ENCODE measurements at regions of chr6 and their contacts with region 1.

Region 1: DNA sequence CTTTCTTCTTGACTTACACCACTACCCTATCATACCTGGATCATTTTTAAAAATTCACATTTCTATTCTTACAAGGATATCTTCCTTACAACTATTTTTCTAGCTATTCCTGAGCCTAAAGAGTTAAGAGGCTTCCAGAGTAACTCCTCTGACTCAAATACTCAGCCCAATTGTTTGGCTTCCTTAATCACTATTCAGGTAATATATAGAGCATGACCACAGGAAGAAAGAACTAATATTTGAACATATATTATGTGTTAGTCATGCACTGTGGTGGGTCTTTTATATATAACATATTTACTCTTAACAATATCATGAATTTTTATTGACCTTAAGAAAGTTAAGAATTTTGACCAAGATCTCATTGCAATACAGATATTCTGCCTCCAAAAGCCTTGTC is 42.0 kb upstream of the ID4 start:
- DNase-seq: peak; percentile 93
- ATAC-seq: peak; percentile 98
- H3K4me3 ChIP-seq: no peak overlapping the region
- H3K27ac ChIP-seq: peak overlapping the region; percentile 71
- H3K4me1 ChIP-seq: peaks cover 24% of the 10 kb centered on the region
- H3K27me3 ChIP-seq: no peaks in the 10 kb centered on the region
- CTCF ChIP-seq: no peak

Region 2: GRCh38 chr6:19723533-19723932 is 71.7 kb before region 1 on chr6:
- CTCF ChIA-PET with region 1: no interaction called
- POLR2A ChIA-PET with region 1: interaction called, 12 read pairs
- intact Hi-C with region 1: loop called (anchors 1 kb)
- DNase-seq: peak; percentile 79
- ATAC-seq: peak; percentile 99
- H3K4me3 ChIP-seq: no peak overlapping the region
- H3K27ac ChIP-seq: peak overlapping the region; percentile 37
- H3K4me1 ChIP-seq: peaks cover 12% of the 10 kb centered on the region
- H3K27me3 ChIP-seq: no peaks in the 10 kb centered on the region
- CTCF ChIP-seq: no peak

Region 3: GRCh38 chr6:19818805-19819204 is 23.6 kb after region 1 on chr6:
- CTCF ChIA-PET with region 1: no interaction called
- POLR2A ChIA-PET with region 1: no interaction called
- intact Hi-C with region 1: no loop called
- DNase-seq: peak; percentile 53
- ATAC-seq: peak; percentile 58; the same call in 1 of the 2 replicates
- H3K4me3 ChIP-seq: no peak overlapping the region
- H3K27ac ChIP-seq: no peak overlapping the region
- H3K4me1 ChIP-seq: peaks cover 8% of the 10 kb centered on the region; the same call in 1 of the 2 replicates
- H3K27me3 ChIP-seq: no peaks in the 10 kb centered on the region
- CTCF ChIP-seq: no peak

Region 4: GRCh38 chr6:19845266-19846041 is 50.2 kb after region 1 on chr6:
- CTCF ChIA-PET with region 1: no interaction called
- POLR2A ChIA-PET with region 1: no interaction called
- intact Hi-C with region 1: no loop called
- DNase-seq: peak; percentile 59
- ATAC-seq: peak; percentile 59; the same call in 1 of the 2 replicates
- H3K4me3 ChIP-seq: no peak overlapping the region
- H3K27ac ChIP-seq: peak overlapping the region; percentile 27; the same call in 1 of the 2 replicates
- H3K4me1 ChIP-seq: no peaks in the 10 kb centered on the region; the same call in 1 of the 2 replicates
- H3K27me3 ChIP-seq: no peaks in the 10 kb centered on the region
- CTCF ChIP-seq: no peak

Region 5: DNA sequence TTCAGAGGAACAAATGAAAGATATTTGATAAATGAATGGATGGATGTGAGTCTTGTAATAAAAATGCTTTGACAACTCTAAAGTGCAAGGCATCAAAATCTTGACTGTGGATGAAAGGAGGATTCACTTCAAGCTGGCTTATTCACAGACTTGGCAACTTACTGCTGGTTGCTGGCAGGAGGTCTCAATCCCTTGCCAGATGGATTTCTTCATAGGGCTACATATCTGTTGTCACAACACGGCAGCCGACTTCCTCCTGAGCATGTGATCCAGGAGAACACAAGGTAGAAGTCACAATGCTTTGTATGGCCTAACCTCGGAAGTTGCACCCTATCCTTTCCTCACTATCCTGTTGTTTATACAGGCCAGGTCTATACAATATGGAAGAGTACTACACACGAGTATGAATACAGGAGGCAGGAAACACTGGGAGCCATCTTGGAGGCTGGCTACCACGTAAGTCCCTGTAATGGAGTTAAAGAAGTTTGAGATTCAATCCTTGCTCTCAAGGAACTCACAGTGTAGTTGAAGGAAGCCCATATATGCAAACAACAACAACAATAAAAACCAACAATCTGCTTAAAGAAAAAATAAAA is 139.9 kb after region 1 on chr6:
- CTCF ChIA-PET with region 1: no interaction called
- POLR2A ChIA-PET with region 1: no interaction called
- intact Hi-C with region 1: no loop called
- DNase-seq: no peak
- ATAC-seq: no peak
- H3K4me3 ChIP-seq: no peak overlapping the region
- H3K27ac ChIP-seq: no peak overlapping the region
- H3K4me1 ChIP-seq: no peaks in the 10 kb centered on the region
- H3K27me3 ChIP-seq: peaks cover 22% of the 10 kb centered on the region
- CTCF ChIP-seq: no peak

Region 6: DNA sequence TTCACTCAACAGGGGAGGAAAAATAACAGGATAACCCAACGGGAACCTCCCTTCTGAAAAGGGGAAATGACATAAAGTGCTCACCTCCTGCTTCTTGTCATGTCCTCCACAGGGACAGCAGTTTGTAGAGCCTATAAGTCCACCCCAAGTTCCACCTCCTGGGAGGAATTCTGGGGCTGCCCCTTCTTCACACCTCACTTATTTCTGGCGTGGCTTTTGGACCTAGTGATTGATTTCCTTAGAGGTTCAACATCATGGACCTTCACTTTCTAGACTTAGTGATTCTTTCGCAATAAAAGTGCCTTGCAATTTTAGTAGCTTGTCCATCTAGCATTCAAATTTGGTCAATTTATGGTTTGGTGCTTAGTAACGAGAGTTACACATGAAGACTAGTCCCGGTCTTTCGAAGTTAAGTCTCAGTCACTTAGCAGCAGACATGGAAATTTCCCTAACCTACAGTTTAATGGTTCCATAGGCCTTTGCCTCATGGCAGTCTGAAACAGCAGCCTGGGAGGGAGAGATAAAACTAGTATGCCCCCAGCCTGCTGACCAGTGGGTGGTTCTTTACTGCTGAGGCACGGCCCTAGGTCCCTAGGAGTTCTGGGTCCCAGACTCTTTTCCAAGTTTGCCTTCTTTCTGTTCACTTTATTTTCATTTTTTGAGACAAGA is 679.8 kb after region 1 on chr6:
- CTCF ChIA-PET with region 1: no interaction called
- POLR2A ChIA-PET with region 1: no interaction called
- intact Hi-C with region 1: no loop called
- DNase-seq: no peak
- ATAC-seq: no peak
- H3K4me3 ChIP-seq: no peak overlapping the region
- H3K27ac ChIP-seq: no peak overlapping the region
- H3K4me1 ChIP-seq: no peaks in the 10 kb centered on the region
- H3K27me3 ChIP-seq: no peaks in the 10 kb centered on the region
- CTCF ChIP-seq: no peak

Measured in PC-3 (cell line).